ENCODE measurements at regions of chr6 and their contacts with region 1.

Region 1: GRCh38 chr6:149863697-149864577 is at the start of gene LRP11:
- DNase-seq: peak; percentile 88
- ATAC-seq: peak; percentile 77
- H3K4me3 ChIP-seq: peak within 1 kb of the TSS; percentile 79
- H3K27ac ChIP-seq: peak within 1 kb of the TSS; percentile 43
- H3K4me1 ChIP-seq: peaks cover 27% of the 10 kb centered on the region
- H3K27me3 ChIP-seq: no peaks in the 10 kb centered on the region
- CTCF ChIP-seq: no peak
- total RNA-seq, gene LRP11: 32.0 and 39.9 TPM in 2 replicates

Region 2: DNA sequence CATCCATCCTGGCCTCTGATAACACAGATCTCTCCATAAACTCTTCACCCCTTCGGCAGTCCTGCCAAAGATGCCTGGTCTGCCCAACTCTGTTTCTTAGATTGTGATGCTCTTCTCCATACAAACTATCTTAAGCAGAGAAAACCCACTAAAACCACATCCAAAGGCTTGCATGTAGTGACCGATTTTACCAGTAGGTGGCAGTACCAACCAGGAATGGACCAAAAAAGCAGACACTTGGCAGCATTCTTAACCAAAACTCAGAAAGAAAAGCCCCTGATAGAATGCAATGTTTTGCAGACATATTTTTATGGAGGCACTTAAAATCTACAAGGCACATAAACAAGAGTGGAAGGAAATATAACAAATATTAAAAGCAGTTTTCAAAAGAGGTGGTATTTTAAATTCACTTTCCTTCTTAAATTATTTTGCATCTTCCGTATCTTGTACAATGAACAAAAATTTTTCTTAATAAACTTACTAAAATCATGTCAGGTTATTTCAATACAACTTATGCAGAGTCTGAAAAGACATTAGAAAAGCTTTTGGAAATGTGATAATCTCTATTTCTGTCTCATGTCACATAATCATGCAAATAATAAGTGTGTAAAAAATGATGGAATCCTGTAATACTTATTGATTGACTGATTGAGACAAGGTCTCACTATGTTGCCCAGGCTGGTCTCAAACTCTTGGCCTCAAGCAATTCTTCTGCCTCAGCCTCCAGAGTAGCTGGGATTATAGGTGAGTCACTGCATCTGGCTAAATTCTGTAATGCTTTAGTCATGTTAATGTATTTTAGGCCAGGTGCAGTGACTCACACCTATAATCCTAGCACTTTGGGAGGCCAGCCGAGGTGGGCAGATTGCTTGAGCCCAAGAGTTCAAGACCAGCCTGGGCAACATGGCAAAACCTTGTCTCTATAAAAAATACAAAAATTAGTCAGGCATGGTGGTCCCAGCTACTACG is 29.1 kb before region 1 on chr6:
- CTCF ChIA-PET with region 1: no interaction called
- POLR2A ChIA-PET with region 1: no interaction called
- intact Hi-C with region 1: loop called (anchors 1 kb)
- DNase-seq: peak; percentile 79
- ATAC-seq: peak; percentile 83
- H3K4me3 ChIP-seq: no peak overlapping the region
- H3K27ac ChIP-seq: peak overlapping the region; percentile 31
- H3K4me1 ChIP-seq: peaks cover 17% of the 10 kb centered on the region
- H3K27me3 ChIP-seq: no peaks in the 10 kb centered on the region
- CTCF ChIP-seq: peak; percentile 93

Region 3: DNA sequence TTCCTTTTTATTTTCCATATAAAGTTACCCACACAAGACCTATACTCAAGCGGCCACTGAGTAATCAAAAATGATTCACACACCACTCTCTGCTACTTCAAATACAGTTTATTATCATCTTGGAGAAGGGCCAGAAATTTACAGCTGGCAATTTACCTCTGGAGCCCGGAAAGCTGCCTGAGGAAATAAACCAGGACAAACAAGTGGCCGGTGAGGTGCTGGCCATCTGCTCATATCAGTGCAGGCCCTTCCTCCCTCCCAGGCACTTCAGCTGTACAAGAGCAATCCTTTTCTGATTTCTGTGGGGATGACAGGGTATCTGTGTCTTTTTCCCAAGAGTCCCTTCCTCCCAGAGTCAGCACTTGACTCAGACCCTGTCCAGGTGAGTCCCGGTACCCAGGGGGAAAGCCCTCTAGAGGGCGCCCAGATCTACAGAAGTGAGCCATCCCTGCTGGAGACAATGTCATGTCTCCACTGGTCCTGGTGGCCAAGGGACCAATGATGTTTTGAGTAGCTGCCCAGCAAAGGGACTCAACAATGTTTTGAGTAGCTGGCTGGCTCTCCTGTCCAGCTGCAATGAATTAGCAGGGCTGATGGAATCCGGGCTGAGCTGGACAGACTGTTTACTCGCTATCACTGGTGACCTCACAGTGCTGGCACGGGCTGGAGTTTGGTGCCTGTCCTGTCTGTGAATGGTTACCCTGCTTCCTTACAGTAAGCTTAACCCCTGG is 23.4 kb before region 1 on chr6:
- CTCF ChIA-PET with region 1: interaction called, 4 read pairs
- POLR2A ChIA-PET with region 1: no interaction called
- intact Hi-C with region 1: loop called (anchors 1 kb)
- DNase-seq: peak; percentile 83
- ATAC-seq: peak; percentile 84
- H3K4me3 ChIP-seq: peak overlapping the region; percentile 16; the same call in 1 of the 2 replicates
- H3K27ac ChIP-seq: peak overlapping the region; percentile 54
- H3K4me1 ChIP-seq: peaks cover 53% of the 10 kb centered on the region
- H3K27me3 ChIP-seq: no peaks in the 10 kb centered on the region
- CTCF ChIP-seq: peak; percentile 85

Region 4: GRCh38 chr6:149852180-149852579 is 11.8 kb before region 1 on chr6:
- CTCF ChIA-PET with region 1: no interaction called
- POLR2A ChIA-PET with region 1: no interaction called
- intact Hi-C with region 1: loop called (anchors 1 kb)
- DNase-seq: peak; percentile 79
- ATAC-seq: peak; percentile 41
- H3K4me3 ChIP-seq: peak overlapping the region; percentile 56
- H3K27ac ChIP-seq: peak overlapping the region; percentile 89
- H3K4me1 ChIP-seq: peaks cover 63% of the 10 kb centered on the region
- H3K27me3 ChIP-seq: no peaks in the 10 kb centered on the region
- CTCF ChIP-seq: no peak